ENCODE measurements at regions of chr1 and their contacts with region 1.

Region 1: GRCh38 chr1:19780267-19780877 is 19.3 kb downstream of the TMCO4 start:
- DNase-seq: no peak
- ATAC-seq: no peak
- H3K4me3 ChIP-seq: no peak overlapping the region
- H3K27ac ChIP-seq: no peak overlapping the region
- H3K4me1 ChIP-seq: no peaks in the 10 kb centered on the region
- H3K27me3 ChIP-seq: no peaks in the 10 kb centered on the region
- CTCF ChIP-seq: no peak
- EP300 ChIP-seq: no peak
- POLR2A ChIP-seq: no peak
- RAD21 ChIP-seq: no peak

Region 2: DNA sequence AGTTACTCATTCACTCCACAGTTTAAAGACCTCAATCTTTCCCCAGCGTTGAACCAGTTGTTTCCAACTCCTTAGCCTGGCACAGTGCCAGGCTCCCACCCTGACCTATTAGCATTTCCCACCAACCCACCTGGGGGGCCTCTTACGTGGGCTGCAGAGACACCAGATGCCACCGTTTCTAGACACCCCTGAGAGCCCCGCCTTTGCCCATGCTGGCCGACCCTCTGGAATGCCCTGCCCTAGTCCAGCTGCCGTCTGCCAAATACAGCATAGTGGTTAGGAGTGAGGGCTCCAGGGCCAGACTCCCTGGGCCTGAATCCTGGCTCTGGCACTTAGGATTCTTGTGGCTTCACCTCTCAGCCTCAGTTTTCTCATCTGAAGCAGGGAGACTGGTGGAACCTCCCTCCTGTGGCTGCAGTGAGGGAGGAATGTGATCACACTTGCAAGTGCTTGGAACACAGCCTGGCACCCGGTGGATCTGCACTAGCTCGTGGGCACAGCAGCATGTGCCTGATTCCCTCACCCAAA is 45.8 kb before region 1 on chr1:
- CTCF ChIA-PET with region 1: no interaction called
- POLR2A ChIA-PET with region 1: no interaction called
- RAD21 ChIA-PET with region 1: interaction called, 3 read pairs
- SMC1A ChIA-PET with region 1: no interaction called
- in situ Hi-C with region 1: loop called (anchors 5 kb)
- intact Hi-C with region 1: no loop called
- DNase-seq: no peak
- ATAC-seq: no peak
- H3K4me3 ChIP-seq: no peak overlapping the region
- H3K27ac ChIP-seq: no peak overlapping the region
- H3K4me1 ChIP-seq: no peaks in the 10 kb centered on the region
- H3K27me3 ChIP-seq: no peaks in the 10 kb centered on the region
- CTCF ChIP-seq: no peak
- EP300 ChIP-seq: no peak
- POLR2A ChIP-seq: no peak
- RAD21 ChIP-seq: no peak

Region 3: DNA sequence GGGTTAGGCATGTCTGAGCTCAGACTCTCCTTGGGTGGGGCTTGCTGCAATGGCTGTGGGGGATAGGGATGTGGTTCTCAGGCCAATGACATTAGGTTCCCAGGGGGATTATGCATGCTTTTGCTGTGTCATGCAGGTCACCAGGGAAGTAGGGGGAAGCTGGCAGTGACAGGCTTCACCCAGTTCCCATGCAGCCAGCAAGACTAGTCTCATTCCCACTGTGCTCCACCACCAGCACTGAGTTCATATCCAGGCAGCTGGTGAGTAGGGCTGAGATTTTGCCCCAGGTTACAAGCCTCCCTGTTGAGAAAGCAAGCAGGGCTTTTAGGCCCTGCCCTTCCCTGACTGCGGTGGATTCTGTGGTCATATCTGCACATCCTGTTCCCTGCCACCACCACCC is 257.5 kb after region 1 on chr1:
- CTCF ChIA-PET with region 1: no interaction called
- POLR2A ChIA-PET with region 1: no interaction called
- RAD21 ChIA-PET with region 1: no interaction called
- SMC1A ChIA-PET with region 1: no interaction called
- in situ Hi-C with region 1: no loop called
- intact Hi-C with region 1: no loop called
- DNase-seq: peak; percentile 24
- ATAC-seq: no peak
- H3K4me3 ChIP-seq: no peak overlapping the region
- H3K27ac ChIP-seq: no peak overlapping the region
- H3K4me1 ChIP-seq: peaks cover 9% of the 10 kb centered on the region
- H3K27me3 ChIP-seq: no peaks in the 10 kb centered on the region; a peak in 2 of 4 replicates
- CTCF ChIP-seq: no peak
- EP300 ChIP-seq: no peak
- POLR2A ChIP-seq: no peak
- RAD21 ChIP-seq: no peak